HCT116 (cell line): ENCODE measurements at regions of chr9 and their contacts with region 1.

Region 1: DNA sequence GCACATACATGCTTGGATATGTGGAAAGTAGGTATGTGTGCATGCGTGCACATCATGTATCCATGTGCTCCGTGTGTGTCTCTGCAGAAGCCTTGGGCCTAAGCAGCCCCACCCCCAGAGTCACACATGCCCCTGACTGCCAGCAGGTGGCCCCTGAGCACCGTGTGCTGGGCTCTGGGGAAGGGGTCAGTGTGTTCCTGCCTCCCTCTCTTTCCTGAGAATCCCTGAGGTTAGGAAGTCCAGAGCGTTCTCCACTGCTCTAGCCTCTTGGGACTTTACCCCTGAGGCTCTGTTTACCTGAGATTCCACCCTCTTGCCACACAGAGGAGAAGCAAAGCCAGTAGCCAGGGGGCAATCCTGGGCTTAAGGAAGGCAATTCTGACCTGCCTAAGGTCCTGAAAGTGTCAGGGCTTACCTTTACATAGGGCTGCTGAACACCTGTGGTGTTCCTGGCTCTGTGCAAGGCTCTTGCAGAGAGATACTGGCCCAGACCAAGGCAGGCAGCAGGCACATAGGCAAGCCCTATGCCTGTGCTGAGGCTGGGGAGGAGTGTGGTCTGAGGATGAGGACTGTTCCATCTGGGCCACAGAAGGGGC is 207.3 kb downstream of the TMEM38B start:
- DNase-seq: no peak
- ATAC-seq: peak; percentile 99
- H3K4me3 ChIP-seq: no peak overlapping the region
- H3K27ac ChIP-seq: no peak overlapping the region
- H3K4me1 ChIP-seq: no peaks in the 10 kb centered on the region
- H3K27me3 ChIP-seq: peaks cover 3% of the 10 kb centered on the region; the same call in 1 of the 2 replicates
- CTCF ChIP-seq: peak; percentile 66 to 87 (median 78)
- POLR2A ChIP-seq: no peak
- RAD21 ChIP-seq: peak; percentile 89

Region 2: DNA sequence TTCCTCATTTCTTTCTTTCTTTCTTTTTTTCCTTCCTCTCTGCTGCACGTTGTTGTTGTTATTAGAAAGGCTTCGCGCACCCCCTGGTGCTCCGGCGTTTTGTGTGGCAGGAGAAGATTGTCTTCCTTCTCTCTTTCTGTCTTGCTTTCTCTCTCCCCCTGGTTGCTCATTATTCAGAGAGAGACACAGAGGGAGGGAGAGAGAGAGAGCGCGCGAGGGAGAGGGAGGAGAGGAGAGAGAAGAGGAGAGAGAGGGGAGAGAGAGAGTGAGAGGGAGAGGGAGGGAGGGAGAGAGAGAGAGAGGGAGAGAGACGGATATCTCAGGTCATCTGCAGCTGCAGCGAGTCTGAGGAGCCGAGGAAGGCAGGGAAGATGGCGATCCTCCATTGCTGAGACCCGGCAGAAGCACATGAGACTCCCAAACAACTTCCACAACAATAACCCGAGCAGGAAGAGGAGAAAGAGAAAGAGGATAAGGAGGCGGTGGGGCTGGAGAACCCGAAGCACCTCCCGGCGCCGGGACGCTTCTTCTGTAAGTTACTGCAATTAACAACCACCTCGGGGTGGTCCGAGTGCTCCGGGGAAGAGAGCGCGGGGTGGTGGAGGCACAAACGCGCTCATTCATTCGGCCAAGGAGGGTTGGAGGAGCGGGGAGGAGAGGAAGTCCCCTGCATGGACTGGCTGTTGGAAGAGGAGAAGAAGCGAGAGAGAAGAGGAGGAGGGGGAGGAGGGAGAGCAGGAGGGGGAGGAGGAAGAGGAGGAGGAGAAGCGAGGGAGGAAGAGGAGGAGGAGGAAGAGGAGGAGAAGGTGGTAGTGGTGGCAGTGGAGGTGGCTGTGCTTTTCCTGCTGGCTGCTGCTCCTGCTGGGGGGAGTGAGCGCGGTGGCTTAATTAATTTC is 961.5 kb after region 1 on chr9 and contains the start of gene ZNF462:
- CTCF ChIA-PET with region 1: no interaction called
- POLR2A ChIA-PET with region 1: no interaction called
- RAD21 ChIA-PET with region 1: no interaction called
- intact Hi-C with region 1: loop called (anchors 5 kb)
- DNase-seq: no peak
- ATAC-seq: peak; percentile 21
- H3K4me3 ChIP-seq: peak within 1 kb of the TSS; percentile 49 to 56
- H3K27ac ChIP-seq: peak within 1 kb of the TSS; percentile 29
- H3K4me1 ChIP-seq: peaks cover 5 to 16% of the 10 kb centered on the region in 2 experiments; a peak in 3 of 4 replicates
- H3K27me3 ChIP-seq: no peaks in the 10 kb centered on the region
- CTCF ChIP-seq: 0 out of 6 replicates have a peak, but pooled peaks of 1 of the 3 experiments have one; percentile 4
- POLR2A ChIP-seq: no peak
- RAD21 ChIP-seq: peak; percentile 28; the same call in 1 of the 2 replicates
- total RNA-seq, gene ZNF462: 18.1 TPM

Region 3: GRCh38 chr9:107137495-107138202 is 1236.0 kb after region 1 on chr9:
- CTCF ChIA-PET with region 1: no interaction called
- POLR2A ChIA-PET with region 1: no interaction called
- RAD21 ChIA-PET with region 1: no interaction called
- intact Hi-C with region 1: loop called (anchors 10 kb)
- DNase-seq: peak; percentile 29
- ATAC-seq: peak; percentile 69
- H3K4me3 ChIP-seq: no peak overlapping the region
- H3K27ac ChIP-seq: no peak overlapping the region
- H3K4me1 ChIP-seq: peaks cover 4 to 8% of the 10 kb centered on the region in 2 experiments; a peak in 2 of 4 replicates
- H3K27me3 ChIP-seq: no peaks in the 10 kb centered on the region
- CTCF ChIP-seq: peak; percentile 64 to 93 (median 80)
- POLR2A ChIP-seq: no peak
- RAD21 ChIP-seq: peak; percentile 83

Region 4: GRCh38 chr9:107172160-107172978 is 1270.8 kb after region 1 on chr9:
- CTCF ChIA-PET with region 1: no interaction called
- POLR2A ChIA-PET with region 1: no interaction called
- RAD21 ChIA-PET with region 1: no interaction called
- intact Hi-C with region 1: loop called (anchors 1 kb)
- DNase-seq: peak; percentile 70
- ATAC-seq: peak; percentile 92
- H3K4me3 ChIP-seq: no peak overlapping the region
- H3K27ac ChIP-seq: no peak overlapping the region
- H3K4me1 ChIP-seq: peaks cover 0 to 54% of the 10 kb centered on the region in 2 experiments; a peak in 3 of 4 replicates
- H3K27me3 ChIP-seq: no peaks in the 10 kb centered on the region
- CTCF ChIP-seq: peak; percentile 74 to 93 (median 90)
- POLR2A ChIP-seq: no peak
- RAD21 ChIP-seq: peak; percentile 91